Gastrocnemius medialis (tissue), 4 donors: ENCODE measurements at regions of chr9 and their contacts with region 1.

Region 1: DNA sequence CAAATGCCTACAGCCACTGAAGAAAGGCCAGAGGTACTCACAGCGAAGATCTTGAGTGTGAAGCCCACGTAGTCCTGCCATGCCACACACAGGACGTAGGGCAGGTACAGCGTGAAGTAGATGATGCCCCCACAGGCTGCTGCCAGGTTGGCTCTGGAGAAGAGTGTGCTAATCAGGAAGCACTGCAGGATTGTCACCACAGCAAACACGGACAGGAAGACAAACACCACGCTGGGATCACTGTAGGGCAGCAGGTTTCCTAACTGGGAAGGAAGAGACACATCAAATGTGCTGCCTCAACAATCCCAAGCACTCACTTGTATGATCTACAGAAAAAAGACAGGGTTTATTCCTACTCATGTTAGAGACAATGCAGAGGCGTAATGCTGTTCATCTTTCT is 63.0 kb downstream of the NIPSNAP3B start:
- DNase-seq: peak in 1 of 2 donors; percentile 42
- ATAC-seq: peak in 1 of 2 donors; percentile 41
- H3K4me3 ChIP-seq: no peak overlapping the region
- H3K27ac ChIP-seq: peak overlapping the region; percentile 61 to 81 (median 74)
- H3K4me1 ChIP-seq: peaks cover 12 to 27% of the 10 kb centered on the region in 2 donors
- H3K27me3 ChIP-seq: no peaks in the 10 kb centered on the region
- CTCF ChIP-seq: no peak
- POLR2A ChIP-seq: no peak

Region 2: DNA sequence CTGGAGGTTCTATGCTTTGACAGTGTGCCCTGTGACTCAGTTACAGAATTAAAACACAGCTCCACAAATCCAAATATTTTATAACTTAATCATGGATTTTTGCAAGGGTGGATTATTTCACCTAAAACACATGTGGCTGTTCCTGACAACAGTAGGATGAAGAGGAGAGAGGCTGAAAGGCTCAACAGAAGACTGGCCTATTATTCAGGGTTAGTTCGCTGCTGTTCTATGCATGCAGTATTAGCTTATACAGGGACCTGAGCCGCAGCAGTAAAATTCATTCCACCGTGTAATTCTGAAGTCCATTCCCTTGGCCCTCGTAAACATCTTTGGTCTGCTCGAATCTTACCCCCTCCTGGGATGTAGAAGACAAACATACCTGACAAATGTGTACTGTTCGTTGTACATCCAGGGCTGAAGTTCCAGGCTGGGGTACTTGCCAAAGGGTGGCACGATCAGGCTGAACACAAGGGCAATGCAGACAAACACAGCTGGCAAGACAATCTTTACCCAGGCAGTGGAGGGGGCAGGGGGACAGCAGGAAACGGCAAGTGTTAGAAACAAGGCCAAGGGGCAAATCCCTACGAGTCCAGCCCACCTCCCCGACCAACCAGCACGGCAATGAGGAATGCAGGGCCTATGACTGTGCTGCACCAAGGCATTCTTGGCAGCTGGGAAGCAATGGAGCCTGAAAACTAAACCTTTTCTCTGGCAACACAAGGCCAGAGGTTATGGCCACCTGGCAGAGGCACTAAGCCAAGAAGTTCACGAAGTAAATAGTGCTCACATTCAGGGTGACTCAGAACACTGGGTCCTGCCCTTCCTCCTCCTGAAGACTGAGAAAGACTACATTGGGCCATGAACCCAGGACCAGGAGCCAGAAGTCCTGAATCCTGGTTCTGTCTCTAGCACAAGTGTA is 16.2 kb before region 1 on chr9:
- in situ Hi-C with region 1: no loop called
- intact Hi-C with region 1: loop called (anchors 2 kb)
- DNase-seq: peak; percentile 81 to 93
- ATAC-seq: peak; percentile 95 to 96
- H3K4me3 ChIP-seq: peak overlapping the region in 1 of 4 donors; percentile 8
- H3K27ac ChIP-seq: peak overlapping the region; percentile 75 to 87 (median 84)
- H3K4me1 ChIP-seq: peaks cover 2 to 14% of the 10 kb centered on the region in 2 donors
- H3K27me3 ChIP-seq: no peaks in the 10 kb centered on the region
- CTCF ChIP-seq: no peak
- POLR2A ChIP-seq: no peak